Heart left ventricle (tissue), 16 donors: ENCODE measurements at regions of chr12 and their contacts with region 1.

Region 1: GRCh38 chr12:95224202-95225170 is 6.9 kb downstream of the VEZT start:
- DNase-seq: no peak
- ATAC-seq: peak in 1 of 4 donors; percentile 28
- H3K4me3 ChIP-seq: no peak overlapping the region
- H3K27ac ChIP-seq: no peak overlapping the region
- H3K4me1 ChIP-seq: peaks cover 0 to 59% (median 19%) of the 10 kb centered on the region in 12 donors
- H3K27me3 ChIP-seq: no peaks in the 10 kb centered on the region
- CTCF ChIP-seq: no peak
- POLR2A ChIP-seq: no peak

Region 2: DNA sequence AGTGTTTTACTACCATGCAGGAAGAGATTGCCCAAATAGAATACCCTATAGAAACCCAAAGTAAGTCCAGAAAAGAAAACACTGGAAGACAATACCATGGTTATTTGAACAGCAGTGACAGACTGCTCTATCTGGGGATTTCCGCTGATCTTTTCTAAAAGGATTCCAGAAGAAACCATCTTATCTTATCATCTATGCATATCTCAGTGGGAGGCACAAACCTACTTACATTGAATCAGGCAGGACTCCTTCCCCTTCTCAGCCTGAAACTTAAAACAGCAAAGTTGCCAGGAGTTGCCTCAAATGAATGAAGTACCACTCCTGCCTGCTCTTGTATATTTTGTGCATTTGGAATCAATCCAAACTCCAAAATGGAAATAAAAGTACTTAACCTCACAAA is 94.4 kb before region 1 on chr12:
- intact Hi-C with region 1: no loop called
- DNase-seq: no peak
- ATAC-seq: no peak
- H3K4me3 ChIP-seq: no peak overlapping the region
- H3K27ac ChIP-seq: no peak overlapping the region
- H3K4me1 ChIP-seq: peaks cover 0 to 22% (median 0%) of the 10 kb centered on the region in 12 donors
- H3K27me3 ChIP-seq: no peaks in the 10 kb centered on the region
- CTCF ChIP-seq: no peak
- POLR2A ChIP-seq: no peak

Region 3: GRCh38 chr12:95277139-95277538 is 52.7 kb after region 1 on chr12:
- intact Hi-C with region 1: loop called in 1 of 10 experiments (anchors 10 kb)
- DNase-seq: no peak
- ATAC-seq: peak in 2 of 4 donors; percentile 58 to 61
- H3K4me3 ChIP-seq: no peak overlapping the region
- H3K27ac ChIP-seq: peak overlapping the region in 1 of 12 donors; percentile 35
- H3K4me1 ChIP-seq: peaks cover 0 to 10% (median 0%) of the 10 kb centered on the region in 12 donors
- H3K27me3 ChIP-seq: no peaks in the 10 kb centered on the region
- CTCF ChIP-seq: no peak
- POLR2A ChIP-seq: no peak